ENCODE measurements at regions of chr5 and their contacts with region 1.

Region 1: GRCh38 chr5:113513384-113514288 is at the start of gene YTHDC2:
- DNase-seq: peak; percentile 92
- H3K4me3 ChIP-seq: peak within 1 kb of the TSS; percentile 74 to 90 (median 81)
- H3K27ac ChIP-seq: peak within 1 kb of the TSS; percentile 92 to 96 (median 94)
- H3K4me1 ChIP-seq: peaks cover 0 to 23% (median 18%) of the 10 kb centered on the region in 4 donors
- H3K27me3 ChIP-seq: no peaks in the 10 kb centered on the region
- CTCF ChIP-seq: peak in 1 of 4 experiments; percentile 4
- EP300 ChIP-seq: no peak
- POLR2A ChIP-seq: peak; percentile 38 to 44
- total RNA-seq, gene YTHDC2: 15.6 to 21.9 (median 21.7) TPM

Region 2: DNA sequence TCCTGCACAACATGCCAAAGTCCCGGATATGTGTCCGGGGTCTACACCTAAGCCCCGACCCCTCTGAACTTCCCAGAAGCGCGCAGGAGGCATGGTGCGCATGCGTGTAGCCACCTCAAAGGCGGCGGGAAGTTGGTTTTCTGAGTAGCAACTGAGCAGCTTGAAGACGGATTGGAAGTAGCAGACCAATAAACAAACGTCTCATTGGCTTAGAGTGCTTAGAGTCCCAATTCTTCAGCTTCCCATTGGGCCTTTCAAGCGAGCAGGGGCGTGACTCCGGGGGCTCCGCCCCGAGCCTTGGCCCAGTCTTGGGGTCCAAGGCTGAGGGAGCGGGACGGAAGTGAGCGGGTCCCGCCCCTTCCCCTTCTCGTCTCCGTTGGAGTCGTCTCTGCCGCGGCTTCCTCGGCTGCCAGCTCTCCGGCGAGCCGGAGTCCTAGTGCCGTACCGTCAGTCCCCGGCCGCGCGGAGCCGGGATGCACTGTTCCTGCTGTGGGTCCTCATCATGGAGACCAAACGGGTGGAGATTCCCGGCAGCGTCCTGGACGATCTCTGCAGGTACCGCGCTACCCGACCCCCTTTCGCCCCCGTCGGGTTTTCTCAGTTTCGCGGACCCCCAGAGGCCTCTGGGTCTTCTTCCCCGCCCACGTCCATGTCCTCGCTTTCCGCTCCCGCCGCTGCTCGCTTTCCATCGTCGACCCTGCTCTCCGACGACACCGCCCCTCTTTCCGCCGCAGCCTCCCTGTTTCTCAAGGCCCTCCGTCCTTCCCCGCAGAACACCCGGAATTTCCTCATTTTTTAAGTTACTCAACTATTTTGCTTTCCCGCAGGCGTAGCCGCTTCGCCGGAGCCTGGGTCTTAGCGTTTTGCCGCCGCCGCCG is 537.0 kb before region 1 on chr5 and contains the start of gene DCP2:
- intact Hi-C with region 1: loop called (anchors 5 kb)
- DNase-seq: peak; percentile 97
- H3K4me3 ChIP-seq: peak within 1 kb of the TSS; percentile 77 to 93 (median 88)
- H3K27ac ChIP-seq: peak within 1 kb of the TSS; percentile 88 to 93 (median 91)
- H3K4me1 ChIP-seq: peaks cover 0 to 36% (median 18%) of the 10 kb centered on the region in 4 donors
- H3K27me3 ChIP-seq: no peaks in the 10 kb centered on the region
- CTCF ChIP-seq: no peak
- EP300 ChIP-seq: no peak
- POLR2A ChIP-seq: peak; percentile 61 to 65
- total RNA-seq, gene DCP2: 18.1 to 26.8 (median 20.8) TPM

Measured in sigmoid colon (tissue), 7 donors.